ENCODE measurements at regions of chr12 and their contacts with region 1.

Region 1: GRCh38 chr12:3073438-3074250 is 3.5 kb upstream of the TSPAN9 start:
- DNase-seq: peak; percentile 84 to 92
- ATAC-seq: peak; percentile 48 to 71 (median 58)
- H3K4me3 ChIP-seq: peak overlapping the region; percentile 1
- H3K27ac ChIP-seq: no peak overlapping the region
- H3K4me1 ChIP-seq: peaks cover 24% of the 10 kb centered on the region
- H3K27me3 ChIP-seq: no peaks in the 10 kb centered on the region
- CTCF ChIP-seq: peak; percentile 98

Region 2: GRCh38 chr12:3122835-3123678 is 49.4 kb after region 1 on chr12:
- intact Hi-C with region 1: loop called in 1 of 2 experiments (anchors 2 kb)
- DNase-seq: peak; percentile 74 to 87
- ATAC-seq: peak; percentile 87 to 93 (median 90)
- H3K4me3 ChIP-seq: peak overlapping the region; percentile 11
- H3K27ac ChIP-seq: peak overlapping the region; percentile 64
- H3K4me1 ChIP-seq: peaks cover 44% of the 10 kb centered on the region
- H3K27me3 ChIP-seq: no peaks in the 10 kb centered on the region
- CTCF ChIP-seq: no peak

Region 3: GRCh38 chr12:3275171-3276041 is 201.8 kb after region 1 on chr12:
- intact Hi-C with region 1: loop called (anchors 1 to 5 kb)
- DNase-seq: peak; percentile 73 to 89
- ATAC-seq: peak; percentile 77 to 92 (median 84)
- H3K4me3 ChIP-seq: no peak overlapping the region
- H3K27ac ChIP-seq: no peak overlapping the region
- H3K4me1 ChIP-seq: peaks cover 4% of the 10 kb centered on the region
- H3K27me3 ChIP-seq: no peaks in the 10 kb centered on the region
- CTCF ChIP-seq: peak; percentile 99

Measured in psoas muscle (tissue), 8 donors.